ENCODE measurements at regions of chr3 and their contacts with region 1.

Region 1: DNA sequence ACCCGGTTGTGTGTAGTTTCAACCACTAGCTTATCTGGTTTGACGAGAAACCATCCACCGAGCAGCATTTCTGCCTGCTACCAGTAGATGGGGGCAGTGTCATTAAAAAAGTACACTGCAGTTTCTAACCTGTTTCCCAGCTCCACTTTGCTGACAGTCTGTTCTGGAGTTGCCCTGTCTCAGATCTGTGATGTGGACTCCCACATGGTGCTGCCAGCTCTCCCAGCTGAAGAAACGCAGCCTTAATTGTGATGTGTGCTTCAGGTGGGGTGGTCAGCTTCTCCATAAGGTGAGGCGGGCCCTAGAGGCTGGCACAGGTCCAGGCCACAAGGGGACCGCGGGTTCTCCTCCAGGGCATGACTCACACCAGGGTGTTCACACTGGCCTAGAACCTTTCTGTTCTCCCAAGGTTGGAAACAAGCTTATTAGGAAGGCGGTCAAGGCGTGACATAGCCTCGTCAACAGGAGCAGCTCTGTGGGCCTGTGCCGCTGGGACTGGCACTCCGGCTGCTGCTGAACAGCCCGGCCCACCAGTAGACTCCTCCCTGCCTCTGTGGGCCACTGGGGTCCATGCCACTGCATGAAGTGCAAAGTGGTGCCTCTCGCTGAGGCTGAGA is 2.9 kb upstream of the FAM43A start:
- DNase-seq: peak; percentile 45 to 63
- ATAC-seq: peak; percentile 74 to 81
- H3K4me3 ChIP-seq: no peak overlapping the region
- H3K27ac ChIP-seq: peak overlapping the region; percentile 41 to 65 (median 50)
- H3K4me1 ChIP-seq: peaks cover 24 to 29% of the 10 kb centered on the region in 2 donors
- H3K27me3 ChIP-seq: no peaks in the 10 kb centered on the region
- CTCF ChIP-seq: peak; percentile 80 to 89 (median 85)
- POLR2A ChIP-seq: no peak

Region 2: GRCh38 chr3:194769020-194769643 is 86.3 kb after region 1 on chr3:
- in situ Hi-C with region 1: no loop called
- intact Hi-C with region 1: loop called (anchors 2 kb)
- DNase-seq: peak; percentile 91
- ATAC-seq: peak; percentile 95 to 96
- H3K4me3 ChIP-seq: peak overlapping the region; percentile 43 to 65 (median 48)
- H3K27ac ChIP-seq: peak overlapping the region; percentile 43 to 62 (median 53)
- H3K4me1 ChIP-seq: peaks cover 10 to 19% of the 10 kb centered on the region in 2 donors
- H3K27me3 ChIP-seq: no peaks in the 10 kb centered on the region
- CTCF ChIP-seq: no peak
- POLR2A ChIP-seq: peak in 1 of 2 donors; percentile 19

Region 3: GRCh38 chr3:194952841-194953241 is 270.0 kb after region 1 on chr3:
- in situ Hi-C with region 1: no loop called
- intact Hi-C with region 1: loop called (anchors 10 kb)
- DNase-seq: no peak
- ATAC-seq: no peak
- H3K4me3 ChIP-seq: no peak overlapping the region
- H3K27ac ChIP-seq: peak overlapping the region in 3 of 4 donors; percentile 34 to 36 (median 36)
- H3K4me1 ChIP-seq: peaks cover 4 to 7% of the 10 kb centered on the region in 2 donors
- H3K27me3 ChIP-seq: no peaks in the 10 kb centered on the region
- CTCF ChIP-seq: no peak
- POLR2A ChIP-seq: no peak

Region 4: GRCh38 chr3:195106418-195106906 is 423.7 kb after region 1 on chr3:
- in situ Hi-C with region 1: loop called (anchors 5 to 10 kb)
- intact Hi-C with region 1: loop called (anchors 1 kb)
- DNase-seq: peak in 1 of 2 donors; percentile 33
- ATAC-seq: peak; percentile 33 to 68
- H3K4me3 ChIP-seq: peak overlapping the region; percentile 5 to 42 (median 31)
- H3K27ac ChIP-seq: no peak overlapping the region
- H3K4me1 ChIP-seq: peaks cover 13 to 23% of the 10 kb centered on the region in 2 donors
- H3K27me3 ChIP-seq: no peaks in the 10 kb centered on the region
- CTCF ChIP-seq: peak; percentile 96 to 100 (median 99)
- POLR2A ChIP-seq: no peak

Region 5: DNA sequence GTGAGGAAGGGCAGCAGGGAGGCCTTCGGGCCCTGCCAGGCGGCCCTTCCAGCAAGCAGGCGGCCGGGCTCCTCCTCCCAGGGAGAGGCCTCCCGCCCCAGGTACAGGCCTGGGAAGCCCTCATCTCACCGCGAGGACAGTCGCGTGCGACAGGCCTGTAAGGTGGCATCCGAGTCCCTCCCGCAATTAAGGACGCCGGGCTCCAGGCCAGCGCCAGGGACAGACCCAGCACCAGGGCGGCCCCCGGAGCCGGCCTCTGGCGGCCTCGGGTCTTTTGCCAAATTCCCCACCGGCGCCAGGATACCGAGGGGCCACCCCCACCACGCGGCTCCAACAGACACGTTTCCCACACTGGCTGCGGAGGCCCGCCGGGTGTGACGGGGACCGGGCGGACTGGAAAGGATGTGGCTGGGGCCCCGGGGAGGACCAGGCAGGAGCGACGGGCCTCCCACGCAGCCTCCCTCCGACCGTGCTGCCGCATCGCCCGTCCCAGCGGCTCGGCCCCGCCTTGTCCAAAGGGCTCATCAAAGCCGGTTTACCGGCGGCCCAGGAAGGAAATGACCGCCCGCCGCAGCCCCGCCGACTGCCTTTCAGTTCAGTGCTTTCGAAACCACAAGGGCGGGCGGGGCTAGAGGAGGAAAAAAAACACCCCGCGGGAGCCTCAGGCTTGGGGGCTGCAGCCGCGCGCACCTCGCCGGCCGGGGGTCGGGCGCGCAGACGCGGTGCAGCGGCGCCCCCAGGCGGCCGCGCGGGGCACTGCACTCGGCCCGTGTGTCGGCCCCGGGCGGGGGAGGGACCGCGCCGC is 576.9 kb after region 1 on chr3:
- in situ Hi-C with region 1: loop called in 3 of 4 experiments (anchors 10 kb)
- intact Hi-C with region 1: loop called (anchors 1 kb)
- DNase-seq: peak; percentile 63 to 84
- ATAC-seq: peak; percentile 82 to 83
- H3K4me3 ChIP-seq: peak overlapping the region; percentile 59 to 81 (median 75)
- H3K27ac ChIP-seq: peak overlapping the region; percentile 78 to 87 (median 84)
- H3K4me1 ChIP-seq: peaks cover 10 to 22% of the 10 kb centered on the region in 2 donors
- H3K27me3 ChIP-seq: no peaks in the 10 kb centered on the region
- CTCF ChIP-seq: peak in 4 of 5 experiments; percentile 98 to 100 (median 99)
- POLR2A ChIP-seq: peak; percentile 60 to 67

Region 6: GRCh38 chr3:195442573-195443390 is 760.0 kb after region 1 on chr3 and contains the start of gene ACAP2:
- in situ Hi-C with region 1: no loop called
- intact Hi-C with region 1: loop called (anchors 10 kb)
- DNase-seq: peak; percentile 100
- ATAC-seq: peak; percentile 91 to 93
- H3K4me3 ChIP-seq: peak within 1 kb of the TSS; percentile 71 to 95 (median 91)
- H3K27ac ChIP-seq: peak within 1 kb of the TSS; percentile 93 to 98 (median 94)
- H3K4me1 ChIP-seq: peaks cover 16 to 25% of the 10 kb centered on the region in 2 donors
- H3K27me3 ChIP-seq: no peaks in the 10 kb centered on the region
- CTCF ChIP-seq: no peak
- POLR2A ChIP-seq: peak; percentile 96 to 97
- total RNA-seq, gene ACAP2: 13.2 to 27.6 (median 15.5) TPM

Region 7: DNA sequence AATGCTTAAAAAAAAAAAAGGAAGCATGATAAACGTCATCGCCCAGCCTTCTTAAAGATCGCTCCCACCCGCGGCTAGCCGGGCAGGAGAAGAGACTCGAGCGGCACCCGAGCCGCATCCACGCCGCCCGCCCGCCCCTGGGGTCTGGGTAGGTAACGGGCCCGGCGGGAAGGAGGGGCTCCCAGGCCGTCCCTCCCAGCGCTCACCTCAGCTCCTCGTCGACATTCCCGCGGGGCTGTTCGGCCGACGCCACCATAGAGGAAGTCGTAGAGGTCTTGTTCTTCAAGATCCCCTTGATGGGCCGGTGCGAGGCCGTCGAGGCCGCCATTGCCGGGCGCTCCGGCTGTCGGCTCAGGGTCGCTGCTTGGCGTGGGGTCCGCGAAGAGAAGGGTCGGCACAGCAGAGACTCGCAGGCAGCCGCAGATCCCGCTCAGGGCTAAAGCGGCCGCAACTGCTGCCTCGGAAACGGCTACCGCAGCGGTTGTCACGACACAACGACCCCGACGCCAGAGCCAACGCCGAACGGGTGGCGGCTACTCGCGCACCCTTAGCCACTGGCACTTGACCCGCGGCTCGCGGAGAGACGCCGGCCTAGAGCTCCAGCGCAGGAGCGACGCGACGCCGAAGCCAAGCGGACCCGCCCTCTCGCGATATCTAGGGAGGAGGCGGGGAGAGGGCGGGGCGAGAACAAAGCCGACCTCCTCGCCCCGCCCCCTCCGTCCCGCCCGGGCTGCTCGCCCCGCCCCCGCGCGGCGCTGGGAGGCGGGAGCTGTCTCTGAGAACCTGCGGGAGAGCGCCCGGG is 860.1 kb after region 1 on chr3 and contains the start of gene PPP1R2:
- in situ Hi-C with region 1: loop called in 2 of 4 experiments (anchors 25 kb)
- intact Hi-C with region 1: no loop called
- DNase-seq: peak; percentile 88 to 92
- ATAC-seq: peak; percentile 78 to 80
- H3K4me3 ChIP-seq: peak within 1 kb of the TSS; percentile 85 to 99 (median 91)
- H3K27ac ChIP-seq: peak within 1 kb of the TSS; percentile 95 to 99 (median 98)
- H3K4me1 ChIP-seq: peaks cover 44 to 61% of the 10 kb centered on the region in 2 donors
- H3K27me3 ChIP-seq: no peaks in the 10 kb centered on the region
- CTCF ChIP-seq: no peak
- POLR2A ChIP-seq: peak; percentile 98 to 99
- total RNA-seq, gene PPP1R2: 80.6 to 133 (median 108) TPM

Measured in gastrocnemius medialis (tissue), 4 donors.